ENCODE measurements at regions of chrX and their contacts with region 1.

Region 1: GRCh38 chrX:57900975-57901374 is 9.3 kb downstream of the ZXDA start:
- DNase-seq: no peak
- ATAC-seq: no peak
- H3K4me3 ChIP-seq: no peak overlapping the region
- H3K27ac ChIP-seq: no peak overlapping the region
- H3K4me1 ChIP-seq: no peaks in the 10 kb centered on the region
- H3K27me3 ChIP-seq: no peaks in the 10 kb centered on the region
- CTCF ChIP-seq: no peak
- EP300 ChIP-seq: no peak
- POLR2A ChIP-seq: no peak
- RAD21 ChIP-seq: no peak

Region 2: DNA sequence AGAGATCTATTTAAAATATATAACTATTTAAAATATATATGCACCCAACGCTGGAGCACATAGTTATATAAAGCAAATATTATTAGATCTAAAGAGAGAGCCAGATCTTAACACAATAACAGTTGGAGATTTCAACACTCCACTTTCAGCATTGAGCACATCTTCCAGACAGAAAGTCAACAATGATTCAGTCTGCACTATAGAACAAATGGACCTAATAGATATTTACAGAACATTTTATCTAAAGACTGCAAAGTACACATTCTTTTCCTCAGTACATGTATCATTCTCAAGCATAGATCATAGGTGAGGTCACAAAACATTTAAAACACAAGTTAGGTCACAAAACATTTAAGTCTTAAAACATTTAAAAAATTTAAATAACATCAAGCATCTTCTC is 257.3 kb before region 1 on chrX:
- CTCF ChIA-PET with region 1: no interaction called
- POLR2A ChIA-PET with region 1: no interaction called
- in situ Hi-C with region 1: no loop called
- intact Hi-C with region 1: no loop called
- DNase-seq: no peak
- ATAC-seq: no peak
- H3K4me3 ChIP-seq: no peak overlapping the region
- H3K27ac ChIP-seq: no peak overlapping the region
- H3K4me1 ChIP-seq: no peaks in the 10 kb centered on the region
- H3K27me3 ChIP-seq: no peaks in the 10 kb centered on the region
- CTCF ChIP-seq: no peak
- EP300 ChIP-seq: no peak
- POLR2A ChIP-seq: no peak
- RAD21 ChIP-seq: no peak

Region 3: GRCh38 chrX:57752866-57753265 is 148.1 kb before region 1 on chrX:
- CTCF ChIA-PET with region 1: no interaction called
- POLR2A ChIA-PET with region 1: no interaction called
- in situ Hi-C with region 1: no loop called
- intact Hi-C with region 1: no loop called
- DNase-seq: no peak
- ATAC-seq: no peak
- H3K4me3 ChIP-seq: no peak overlapping the region
- H3K27ac ChIP-seq: no peak overlapping the region
- H3K4me1 ChIP-seq: no peaks in the 10 kb centered on the region
- H3K27me3 ChIP-seq: no peaks in the 10 kb centered on the region
- CTCF ChIP-seq: no peak
- EP300 ChIP-seq: no peak
- POLR2A ChIP-seq: no peak
- RAD21 ChIP-seq: no peak

Region 4: GRCh38 chrX:57848857-57849256 is 52.1 kb before region 1 on chrX:
- CTCF ChIA-PET with region 1: no interaction called
- POLR2A ChIA-PET with region 1: no interaction called
- in situ Hi-C with region 1: no loop called
- intact Hi-C with region 1: loop called (anchors 10 kb)
- DNase-seq: no peak
- ATAC-seq: no peak
- H3K4me3 ChIP-seq: no peak overlapping the region
- H3K27ac ChIP-seq: no peak overlapping the region
- H3K4me1 ChIP-seq: no peaks in the 10 kb centered on the region
- H3K27me3 ChIP-seq: no peaks in the 10 kb centered on the region
- CTCF ChIP-seq: no peak
- EP300 ChIP-seq: no peak
- POLR2A ChIP-seq: no peak
- RAD21 ChIP-seq: no peak